Mammary epithelial cell (primary cell): ENCODE measurements at regions of chr1 and their contacts with region 1.

Region 1: DNA sequence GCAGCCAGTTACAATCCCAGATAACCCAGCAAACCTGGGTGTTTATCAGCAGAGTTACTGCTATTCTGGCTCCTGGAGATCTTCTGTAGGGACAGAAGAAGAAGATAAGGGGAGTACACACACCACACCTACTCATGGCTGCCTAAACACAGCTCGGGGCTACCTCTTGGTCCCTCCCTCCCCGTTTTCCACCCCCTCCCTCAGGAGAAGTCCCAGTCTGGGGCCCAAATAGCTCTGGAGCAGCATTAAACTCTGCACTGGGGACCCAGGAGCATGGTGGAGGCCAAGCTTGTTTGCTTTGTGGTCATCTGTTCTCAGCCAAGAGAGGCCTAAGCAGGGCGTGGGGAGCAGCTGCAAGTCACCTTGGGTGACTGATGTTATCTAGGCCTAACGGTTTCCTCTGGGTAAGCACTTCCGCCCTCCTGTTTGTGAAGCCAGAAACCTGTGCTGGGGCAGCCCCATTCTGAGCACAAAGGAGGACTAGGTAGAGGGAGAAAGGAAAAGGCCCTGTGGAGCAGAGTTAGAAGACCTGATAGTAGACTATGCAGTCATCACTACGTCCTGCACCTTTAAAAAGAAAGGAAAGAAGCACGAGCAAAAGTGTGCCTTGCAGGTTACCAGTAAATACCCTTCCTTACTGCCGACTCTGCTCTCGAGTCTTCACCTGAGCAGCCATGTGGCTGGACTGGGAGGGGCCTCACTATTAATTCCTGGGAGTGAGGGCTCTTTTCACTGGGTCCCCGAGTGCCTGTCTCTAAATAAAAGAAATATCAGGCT is 2.0 kb upstream of the RCSD1 start:
- DNase-seq: no peak
- H3K4me3 ChIP-seq: no peak overlapping the region
- H3K27ac ChIP-seq: no peak overlapping the region
- H3K4me1 ChIP-seq: peaks cover 15% of the 10 kb centered on the region
- H3K27me3 ChIP-seq: no peaks in the 10 kb centered on the region
- CTCF ChIP-seq: no peak

Region 2: DNA sequence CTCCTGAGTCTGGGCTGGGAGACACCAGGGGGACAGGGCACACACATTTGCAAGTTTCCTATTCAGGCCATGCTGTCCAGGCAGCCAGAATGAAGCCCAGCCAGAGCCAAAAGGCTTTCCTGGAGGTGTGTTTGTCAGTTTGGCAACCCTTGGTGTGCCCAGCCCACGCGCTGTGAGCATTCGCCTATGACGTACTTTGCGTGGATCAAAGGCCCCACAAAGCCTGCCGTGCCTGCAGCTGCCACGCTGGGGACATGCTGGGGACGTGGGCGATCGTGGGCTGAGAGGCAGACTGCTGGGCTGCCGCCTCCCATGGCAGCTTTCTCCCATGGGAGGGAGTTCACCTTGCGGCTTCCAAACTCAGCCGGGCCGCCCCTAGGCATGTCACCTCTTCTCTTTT is 167.2 kb before region 1 on chr1:
- CTCF ChIA-PET with region 1: no interaction called
- dilution Hi-C with region 1: no loop called
- in situ Hi-C with region 1: no loop called
- intact Hi-C with region 1: no loop called
- DNase-seq: no peak
- H3K4me3 ChIP-seq: no peak overlapping the region
- H3K27ac ChIP-seq: no peak overlapping the region
- H3K4me1 ChIP-seq: no peaks in the 10 kb centered on the region
- H3K27me3 ChIP-seq: no peaks in the 10 kb centered on the region
- CTCF ChIP-seq: no peak

Region 3: GRCh38 chr1:167553136-167554027 is 74.7 kb before region 1 on chr1 and contains the start of gene CREG1:
- CTCF ChIA-PET with region 1: no interaction called
- dilution Hi-C with region 1: no loop called
- in situ Hi-C with region 1: no loop called
- intact Hi-C with region 1: no loop called
- DNase-seq: peak; percentile 92
- H3K4me3 ChIP-seq: peak within 1 kb of the TSS; percentile 65 to 89 (median 66)
- H3K27ac ChIP-seq: peak within 1 kb of the TSS; percentile 47
- H3K4me1 ChIP-seq: peaks cover 46% of the 10 kb centered on the region
- H3K27me3 ChIP-seq: no peaks in the 10 kb centered on the region
- CTCF ChIP-seq: no peak
- total RNA-seq, gene CREG1: 105 to 242 TPM

Region 4: DNA sequence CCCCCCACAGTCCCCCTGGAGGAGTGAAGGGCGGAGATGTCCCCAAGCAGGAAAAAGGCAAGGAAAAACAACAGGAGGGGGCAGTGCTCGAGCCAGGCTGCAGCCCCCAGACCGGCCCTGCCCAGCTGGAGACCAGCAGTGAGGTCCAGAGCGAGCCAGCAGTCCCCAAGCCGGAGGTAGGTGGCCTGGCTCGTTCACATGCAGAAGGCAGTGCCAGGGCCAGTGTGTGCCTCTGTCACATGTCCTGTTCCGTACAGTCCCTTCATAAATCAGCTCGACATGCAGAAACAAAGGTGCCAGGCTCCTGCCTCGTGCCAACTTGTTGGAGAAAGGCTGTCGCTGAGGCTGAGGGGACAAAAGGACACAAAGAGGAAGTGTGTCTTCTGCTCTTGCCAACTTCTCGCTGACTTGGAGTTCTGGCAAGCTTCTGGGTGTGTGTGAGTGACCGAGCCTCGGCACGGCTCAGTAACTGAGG is 69.7 kb after region 1 on chr1:
- CTCF ChIA-PET with region 1: no interaction called
- dilution Hi-C with region 1: loop called (anchors 5 kb)
- in situ Hi-C with region 1: no loop called
- intact Hi-C with region 1: no loop called
- DNase-seq: no peak
- H3K4me3 ChIP-seq: no peak overlapping the region
- H3K27ac ChIP-seq: no peak overlapping the region
- H3K4me1 ChIP-seq: peaks cover 9% of the 10 kb centered on the region
- H3K27me3 ChIP-seq: no peaks in the 10 kb centered on the region
- CTCF ChIP-seq: no peak